CD14-positive monocyte (primary cell): ENCODE measurements at regions of chr12 and their contacts with region 1.

Region 1: DNA sequence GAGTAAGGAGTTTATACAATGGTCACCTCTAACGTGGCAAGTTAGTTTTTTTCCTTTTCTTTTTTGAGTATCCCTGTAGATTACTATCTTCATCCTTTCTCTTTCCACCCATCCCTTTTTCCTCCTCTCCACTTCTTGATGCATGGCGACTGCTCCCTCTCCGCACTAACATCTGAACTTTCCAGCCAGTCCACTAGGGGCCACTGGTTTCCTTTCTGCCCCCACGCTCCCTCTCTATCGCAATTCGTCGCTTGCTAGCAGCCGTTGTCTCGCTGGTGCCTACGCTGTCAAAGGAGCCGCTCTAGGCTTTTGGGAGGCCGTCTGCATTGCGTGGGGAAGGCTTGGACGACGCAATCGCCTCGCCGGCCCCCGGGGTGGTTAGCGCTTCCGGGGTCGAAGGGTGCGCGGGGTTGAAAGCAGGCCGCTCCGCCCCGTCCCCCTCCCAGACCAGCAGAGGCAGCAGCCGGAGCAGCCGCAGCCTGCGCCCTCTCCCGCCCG is at the start of gene PCBP2:
- DNase-seq: peak; percentile 98 to 99 (median 98)
- H3K4me3 ChIP-seq: peak within 1 kb of the TSS; percentile 80 to 95 (median 87)
- H3K4me3 Mint-ChIP-seq: peak within 1 kb of the TSS; percentile 94 to 99
- H3K27ac ChIP-seq: peak within 1 kb of the TSS; percentile 85 to 91
- H3K27ac Mint-ChIP-seq: peak within 1 kb of the TSS; percentile 96 to 99 (median 99)
- H3K4me1 ChIP-seq: peaks cover 12 to 17% of the 10 kb centered on the region in 2 donors
- H3K4me1 Mint-ChIP-seq: peaks cover 19% of the 10 kb centered on the region
- H3K27me3 ChIP-seq: no peaks in the 10 kb centered on the region
- H3K27me3 Mint-ChIP-seq: peaks cover 0 to 4% (median 0%) of the 10 kb centered on the region in 3 donors
- CTCF ChIP-seq: peak; percentile 81
- polyA plus RNA-seq, gene PCBP2: 79.6 to 588 (median 81.9) TPM

Region 2: DNA sequence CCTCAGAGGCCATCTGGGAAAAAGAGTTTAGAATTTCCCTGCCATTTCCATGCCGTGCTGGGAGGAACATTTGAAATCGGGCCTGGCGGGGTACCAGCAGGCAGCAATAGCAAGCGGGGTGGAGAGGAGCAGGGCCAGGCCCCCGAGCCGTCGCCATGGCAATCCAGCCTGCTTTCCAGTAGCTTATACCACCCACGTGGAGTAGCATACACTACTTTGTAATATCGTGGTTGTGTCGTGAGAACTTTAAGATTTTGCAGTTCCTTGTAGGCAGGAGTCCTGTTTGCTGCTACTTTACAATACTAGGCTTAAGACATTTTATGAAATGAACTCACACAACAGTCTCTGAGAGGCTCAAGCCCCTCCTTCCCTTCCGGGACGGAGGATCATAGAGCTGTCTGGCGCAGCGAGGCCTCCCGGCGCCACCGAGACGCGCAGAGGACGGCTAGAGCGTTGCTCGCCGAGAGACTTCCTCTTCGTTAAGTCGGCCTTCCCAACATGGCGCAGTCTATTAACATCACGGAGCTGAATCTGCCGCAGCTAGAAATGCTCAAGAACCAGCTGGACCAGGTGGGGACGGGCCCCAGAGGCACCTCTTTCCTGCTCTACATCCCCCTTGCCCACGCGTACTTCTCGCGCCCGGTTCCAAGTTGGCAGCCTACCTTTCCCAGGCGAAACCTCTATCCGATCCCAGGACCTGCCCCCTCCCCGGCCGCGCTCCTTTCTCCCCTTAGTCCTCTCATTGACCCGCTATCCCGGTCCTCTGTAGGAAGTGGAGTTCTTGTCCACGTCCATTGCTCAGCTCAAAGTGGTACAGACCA is 156.4 kb before region 1 on chr12 and contains the start of gene PFDN5:
- intact Hi-C with region 1: loop called in 1 of 2 experiments (anchors 5 kb)
- DNase-seq: peak; percentile 79 to 87 (median 80)
- H3K4me3 ChIP-seq: peak within 1 kb of the TSS; percentile 96 to 97 (median 97)
- H3K4me3 Mint-ChIP-seq: peak within 1 kb of the TSS; percentile 96 to 97
- H3K27ac ChIP-seq: peak within 1 kb of the TSS; percentile 78 to 97
- H3K27ac Mint-ChIP-seq: peak within 1 kb of the TSS; percentile 96 to 100 (median 99)
- H3K4me1 ChIP-seq: peaks cover 50 to 53% of the 10 kb centered on the region in 2 donors
- H3K4me1 Mint-ChIP-seq: peaks cover 50% of the 10 kb centered on the region
- H3K27me3 ChIP-seq: no peaks in the 10 kb centered on the region
- H3K27me3 Mint-ChIP-seq: peaks cover 0 to 2% (median 0%) of the 10 kb centered on the region in 3 donors
- CTCF ChIP-seq: no peak
- polyA plus RNA-seq, gene PFDN5: 1,474 to 2,196 (median 1,751) TPM

Region 3: DNA sequence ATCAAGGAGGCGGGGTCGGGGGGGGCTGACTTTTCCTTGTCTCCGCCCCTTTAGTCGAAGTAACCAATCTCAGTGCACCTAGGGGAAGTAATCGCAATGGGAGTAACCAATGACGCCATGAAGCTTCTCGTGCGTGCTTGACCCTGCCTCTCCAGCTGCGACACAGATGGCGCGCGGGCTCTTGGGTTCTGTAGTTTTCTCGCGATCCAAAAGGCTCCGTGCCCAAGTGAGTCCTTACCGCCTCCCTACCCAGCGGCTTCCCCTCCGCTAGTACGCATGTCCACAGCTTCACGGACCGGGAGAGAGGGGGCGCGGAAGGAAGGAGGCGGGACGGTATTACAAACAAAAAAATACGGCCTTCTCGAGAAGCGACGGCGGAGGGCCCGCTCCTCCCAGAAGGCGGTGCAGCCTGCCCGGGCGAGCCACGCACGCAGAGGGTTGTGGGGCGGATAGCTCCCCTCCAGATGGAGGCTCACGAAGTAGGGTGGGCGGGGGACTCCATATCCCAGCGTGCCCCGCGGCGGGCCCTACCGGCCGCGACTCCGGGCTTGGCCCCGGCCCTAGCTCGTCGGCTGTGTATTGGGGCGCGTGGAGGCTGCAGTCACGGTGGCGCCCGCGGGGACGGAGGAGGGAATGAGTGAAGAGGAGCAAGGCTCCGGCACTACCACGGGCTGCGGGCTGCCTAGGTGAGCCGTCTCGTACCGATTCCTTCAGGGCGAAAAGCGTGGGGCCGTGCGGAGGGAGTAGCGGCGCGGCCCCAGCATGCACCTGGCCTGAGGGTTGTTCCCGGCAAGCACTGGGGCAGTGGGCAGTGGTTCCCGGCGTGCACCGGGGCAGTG is 49.3 kb after region 1 on chr12 and contains the start of gene TARBP2:
- intact Hi-C with region 1: loop called (anchors 1 to 5 kb)
- DNase-seq: peak; percentile 99
- H3K4me3 ChIP-seq: peak within 1 kb of the TSS; percentile 74 to 83 (median 81)
- H3K4me3 Mint-ChIP-seq: peak within 1 kb of the TSS; percentile 88 to 100
- H3K27ac ChIP-seq: peak within 1 kb of the TSS; percentile 99
- H3K27ac Mint-ChIP-seq: peak within 1 kb of the TSS; percentile 97 to 99 (median 99)
- H3K4me1 ChIP-seq: peaks cover 42 to 46% of the 10 kb centered on the region in 2 donors
- H3K4me1 Mint-ChIP-seq: peaks cover 47% of the 10 kb centered on the region
- H3K27me3 ChIP-seq: no peaks in the 10 kb centered on the region
- H3K27me3 Mint-ChIP-seq: peaks cover 0 to 6% (median 0%) of the 10 kb centered on the region in 3 donors
- CTCF ChIP-seq: no peak
- polyA plus RNA-seq, gene TARBP2: 16.6 to 39.4 (median 24.4) TPM